Activated CD4-positive, alpha-beta T cell treated with anti-CD3 and anti-CD28 coated beads for 36 hours (primary cell): ENCODE measurements at regions of chr3 and their contacts with region 1.

Region 1: GRCh38 chr3:115169808-115170207 is 22.7 kb upstream of the ZBTB20 start:
- DNase-seq: no peak
- ATAC-seq: no peak
- H3K4me3 Mint-ChIP-seq: no peak overlapping the region
- H3K27ac Mint-ChIP-seq: no peak overlapping the region
- H3K4me1 Mint-ChIP-seq: peaks cover 12% of the 10 kb centered on the region
- H3K27me3 Mint-ChIP-seq: no peaks in the 10 kb centered on the region

Region 2: GRCh38 chr3:114727373-114727772 is 442.4 kb before region 1 on chr3:
- CTCF ChIA-PET with region 1: no interaction called
- POLR2A ChIA-PET with region 1: no interaction called
- intact Hi-C with region 1: no loop called
- DNase-seq: no peak
- ATAC-seq: no peak
- H3K4me3 Mint-ChIP-seq: no peak overlapping the region
- H3K27ac Mint-ChIP-seq: no peak overlapping the region
- H3K4me1 Mint-ChIP-seq: peaks cover 6% of the 10 kb centered on the region
- H3K27me3 Mint-ChIP-seq: no peaks in the 10 kb centered on the region

Region 3: GRCh38 chr3:114827495-114827894 is 342.3 kb before region 1 on chr3:
- CTCF ChIA-PET with region 1: interaction called, 5 read pairs
- POLR2A ChIA-PET with region 1: no interaction called
- intact Hi-C with region 1: loop called (anchors 1 to 5 kb)
- DNase-seq: peak; percentile 12
- ATAC-seq: peak; percentile 63
- H3K4me3 Mint-ChIP-seq: no peak overlapping the region
- H3K27ac Mint-ChIP-seq: no peak overlapping the region
- H3K4me1 Mint-ChIP-seq: peaks cover 5% of the 10 kb centered on the region
- H3K27me3 Mint-ChIP-seq: no peaks in the 10 kb centered on the region

Region 4: DNA sequence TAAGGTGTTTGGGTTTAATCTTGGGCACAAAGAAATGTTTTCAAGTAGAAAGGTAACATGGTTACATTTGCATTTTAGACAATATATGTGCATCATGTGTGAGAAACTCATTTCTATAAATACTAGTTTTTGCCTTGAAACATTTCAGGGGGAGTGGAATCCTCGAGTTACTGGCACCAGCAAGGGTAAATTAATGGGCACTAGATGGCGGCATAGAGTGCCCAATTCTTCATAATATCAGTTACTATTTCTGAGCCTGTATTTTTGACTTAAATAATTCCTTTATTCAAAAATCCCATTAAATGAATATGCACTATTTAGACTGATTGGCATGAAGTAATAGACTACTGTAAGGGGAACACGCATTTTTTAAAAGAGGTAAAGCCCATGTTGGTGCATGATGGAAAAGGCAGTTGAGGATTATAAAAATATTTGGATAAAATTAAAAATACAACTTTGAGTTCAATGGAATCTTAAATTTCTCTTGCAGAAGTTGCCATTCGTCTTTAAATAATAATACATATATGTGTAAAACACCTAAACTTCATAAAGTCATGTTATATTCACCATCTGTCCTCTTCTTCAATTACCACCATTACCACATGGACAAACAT is 129.0 kb before region 1 on chr3:
- CTCF ChIA-PET with region 1: interaction called, 6 read pairs
- POLR2A ChIA-PET with region 1: no interaction called
- intact Hi-C with region 1: loop called (anchors 2 to 5 kb)
- DNase-seq: peak; percentile 50
- ATAC-seq: peak; percentile 61
- H3K4me3 Mint-ChIP-seq: no peak overlapping the region
- H3K27ac Mint-ChIP-seq: no peak overlapping the region
- H3K4me1 Mint-ChIP-seq: peaks cover 11% of the 10 kb centered on the region
- H3K27me3 Mint-ChIP-seq: no peaks in the 10 kb centered on the region